ENCODE measurements at regions of chr6 and their contacts with region 1.

Region 1: GRCh38 chr6:31619805-31620585 is 520 bp upstream of the PRRC2A start:
- DNase-seq: peak; percentile 94 to 99 (median 96)
- ATAC-seq: peak; percentile 80
- H3K4me3 ChIP-seq: peak overlapping the region; percentile 83 to 96
- H3K4me3 Mint-ChIP-seq: peak overlapping the region; percentile 91
- H3K27ac ChIP-seq: peak overlapping the region; percentile 95 to 99
- H3K27ac Mint-ChIP-seq: peak overlapping the region; percentile 96
- H3K4me1 ChIP-seq: peaks cover 37% of the 10 kb centered on the region
- H3K4me1 Mint-ChIP-seq: peaks cover 52% of the 10 kb centered on the region
- H3K27me3 ChIP-seq: no peaks in the 10 kb centered on the region
- H3K27me3 Mint-ChIP-seq: no peaks in the 10 kb centered on the region
- CTCF ChIP-seq: no peak

Region 2: GRCh38 chr6:31308050-31308844 is 311.7 kb before region 1 on chr6:
- CTCF ChIA-PET with region 1: no interaction called
- POLR2A ChIA-PET with region 1: no interaction called
- intact Hi-C with region 1: no loop called
- DNase-seq: peak; percentile 48 to 86 (median 69)
- ATAC-seq: peak; percentile 95
- H3K4me3 ChIP-seq: peak overlapping the region; percentile 64 to 74
- H3K4me3 Mint-ChIP-seq: peak overlapping the region; percentile 85
- H3K27ac ChIP-seq: peak overlapping the region in 1 of 2 experiments; percentile 27
- H3K27ac Mint-ChIP-seq: peak overlapping the region; percentile 77
- H3K4me1 ChIP-seq: peaks cover 9% of the 10 kb centered on the region
- H3K4me1 Mint-ChIP-seq: peaks cover 7% of the 10 kb centered on the region
- H3K27me3 ChIP-seq: no peaks in the 10 kb centered on the region
- H3K27me3 Mint-ChIP-seq: no peaks in the 10 kb centered on the region
- CTCF ChIP-seq: no peak

Region 3: GRCh38 chr6:31383149-31383548 is 236.8 kb before region 1 on chr6:
- CTCF ChIA-PET with region 1: no interaction called
- POLR2A ChIA-PET with region 1: no interaction called
- intact Hi-C with region 1: no loop called
- DNase-seq: no peak
- ATAC-seq: no peak
- H3K4me3 ChIP-seq: no peak overlapping the region
- H3K4me3 Mint-ChIP-seq: no peak overlapping the region
- H3K27ac ChIP-seq: no peak overlapping the region
- H3K27ac Mint-ChIP-seq: no peak overlapping the region
- H3K4me1 ChIP-seq: no peaks in the 10 kb centered on the region
- H3K4me1 Mint-ChIP-seq: no peaks in the 10 kb centered on the region
- H3K27me3 ChIP-seq: peaks cover 0 to 6% of the 10 kb centered on the region in 2 experiments
- H3K27me3 Mint-ChIP-seq: peaks cover 10% of the 10 kb centered on the region
- CTCF ChIP-seq: no peak

Region 4: GRCh38 chr6:31580807-31581433 is 39.1 kb before region 1 on chr6:
- CTCF ChIA-PET with region 1: interaction called, 6 read pairs
- POLR2A ChIA-PET with region 1: interaction called, 20 read pairs
- intact Hi-C with region 1: no loop called
- DNase-seq: peak; percentile 81 to 97 (median 90)
- ATAC-seq: peak; percentile 73
- H3K4me3 ChIP-seq: peak overlapping the region; percentile 92 to 100
- H3K4me3 Mint-ChIP-seq: peak overlapping the region; percentile 99
- H3K27ac ChIP-seq: peak overlapping the region; percentile 77 to 91
- H3K27ac Mint-ChIP-seq: peak overlapping the region; percentile 96
- H3K4me1 ChIP-seq: peaks cover 69% of the 10 kb centered on the region
- H3K4me1 Mint-ChIP-seq: peaks cover 77% of the 10 kb centered on the region
- H3K27me3 ChIP-seq: no peaks in the 10 kb centered on the region
- H3K27me3 Mint-ChIP-seq: no peaks in the 10 kb centered on the region
- CTCF ChIP-seq: peak; percentile 98

Region 5: GRCh38 chr6:31597006-31597405 is 23.0 kb before region 1 on chr6:
- CTCF ChIA-PET with region 1: interaction called, 34 read pairs
- POLR2A ChIA-PET with region 1: interaction called, 10 read pairs
- intact Hi-C with region 1: no loop called
- DNase-seq: peak in 5 of 9 experiments; percentile 47 to 86 (median 56)
- ATAC-seq: peak; percentile 83
- H3K4me3 ChIP-seq: no peak overlapping the region
- H3K4me3 Mint-ChIP-seq: peak overlapping the region; percentile 3
- H3K27ac ChIP-seq: no peak overlapping the region
- H3K27ac Mint-ChIP-seq: peak overlapping the region; percentile 79
- H3K4me1 ChIP-seq: peaks cover 53% of the 10 kb centered on the region
- H3K4me1 Mint-ChIP-seq: peaks cover 50% of the 10 kb centered on the region
- H3K27me3 ChIP-seq: no peaks in the 10 kb centered on the region
- H3K27me3 Mint-ChIP-seq: no peaks in the 10 kb centered on the region
- CTCF ChIP-seq: peak; percentile 66

Region 6: GRCh38 chr6:31652925-31653718 is 33.1 kb after region 1 on chr6:
- CTCF ChIA-PET with region 1: interaction called, 3 read pairs
- POLR2A ChIA-PET with region 1: interaction called, 25 read pairs
- intact Hi-C with region 1: loop called (anchors 1 kb)
- DNase-seq: peak in 4 of 9 experiments; percentile 77 to 92 (median 88)
- ATAC-seq: peak; percentile 70
- H3K4me3 ChIP-seq: peak overlapping the region; percentile 78 to 82
- H3K4me3 Mint-ChIP-seq: peak overlapping the region; percentile 92
- H3K27ac ChIP-seq: peak overlapping the region; percentile 94 to 96
- H3K27ac Mint-ChIP-seq: peak overlapping the region; percentile 100
- H3K4me1 ChIP-seq: peaks cover 32% of the 10 kb centered on the region
- H3K4me1 Mint-ChIP-seq: peaks cover 59% of the 10 kb centered on the region
- H3K27me3 ChIP-seq: no peaks in the 10 kb centered on the region
- H3K27me3 Mint-ChIP-seq: no peaks in the 10 kb centered on the region
- CTCF ChIP-seq: no peak

Region 7: DNA sequence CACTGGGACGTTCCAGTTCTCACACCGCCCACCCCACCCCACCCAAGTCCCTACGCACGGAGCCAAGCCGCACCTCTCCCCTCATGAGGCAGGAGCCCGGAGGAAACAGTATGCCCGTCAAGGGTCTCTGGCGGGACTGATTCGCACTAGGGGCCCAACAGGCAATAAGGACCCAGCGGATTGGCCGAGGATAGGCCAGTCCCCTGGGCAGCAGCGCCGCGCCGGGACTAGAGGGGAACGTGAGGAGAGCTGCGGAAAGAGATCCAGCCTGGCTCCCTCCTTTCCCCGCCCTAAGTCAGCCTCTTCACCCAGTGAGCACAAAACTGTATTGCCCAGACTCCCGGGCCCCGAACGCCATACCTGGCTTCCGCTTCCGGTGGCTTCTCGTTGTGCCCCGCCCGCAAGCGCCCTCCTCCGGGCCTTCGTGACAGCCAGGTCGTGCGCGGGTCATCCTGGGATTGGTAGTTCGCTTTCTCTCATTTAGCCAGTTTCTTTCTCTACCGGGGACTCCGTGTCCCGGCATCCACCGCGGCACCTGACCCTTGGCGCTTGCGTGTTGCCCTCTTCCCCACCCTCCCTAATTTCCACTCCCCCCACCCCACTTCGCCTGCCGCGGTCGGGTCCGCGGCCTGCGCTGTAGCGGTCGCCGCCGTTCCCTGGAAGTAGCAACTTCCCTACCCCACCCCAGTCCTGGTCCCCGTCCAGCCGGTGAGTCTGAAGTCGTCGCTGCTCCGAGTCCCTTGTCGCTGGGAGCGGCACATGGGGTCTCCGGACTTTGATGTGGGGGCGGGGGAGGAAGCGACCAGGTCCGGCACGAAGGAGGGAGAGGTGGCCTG is 45.7 kb after region 1 on chr6 and contains the start of gene CSNK2B:
- CTCF ChIA-PET with region 1: no interaction called
- POLR2A ChIA-PET with region 1: interaction called, 3 read pairs
- intact Hi-C with region 1: loop called (anchors 1 kb)
- DNase-seq: peak; percentile 95 to 99 (median 98)
- ATAC-seq: peak; percentile 84
- H3K4me3 ChIP-seq: peak within 1 kb of the TSS; percentile 91 to 94
- H3K4me3 Mint-ChIP-seq: peak within 1 kb of the TSS; percentile 95
- H3K27ac ChIP-seq: peak within 1 kb of the TSS; percentile 96 to 99
- H3K27ac Mint-ChIP-seq: peak within 1 kb of the TSS; percentile 98
- H3K4me1 ChIP-seq: peaks cover 44% of the 10 kb centered on the region
- H3K4me1 Mint-ChIP-seq: peaks cover 56% of the 10 kb centered on the region
- H3K27me3 ChIP-seq: no peaks in the 10 kb centered on the region
- H3K27me3 Mint-ChIP-seq: no peaks in the 10 kb centered on the region
- CTCF ChIP-seq: no peak
- total RNA-seq, gene CSNK2B: 80.9 to 86.1 TPM

Region 8: DNA sequence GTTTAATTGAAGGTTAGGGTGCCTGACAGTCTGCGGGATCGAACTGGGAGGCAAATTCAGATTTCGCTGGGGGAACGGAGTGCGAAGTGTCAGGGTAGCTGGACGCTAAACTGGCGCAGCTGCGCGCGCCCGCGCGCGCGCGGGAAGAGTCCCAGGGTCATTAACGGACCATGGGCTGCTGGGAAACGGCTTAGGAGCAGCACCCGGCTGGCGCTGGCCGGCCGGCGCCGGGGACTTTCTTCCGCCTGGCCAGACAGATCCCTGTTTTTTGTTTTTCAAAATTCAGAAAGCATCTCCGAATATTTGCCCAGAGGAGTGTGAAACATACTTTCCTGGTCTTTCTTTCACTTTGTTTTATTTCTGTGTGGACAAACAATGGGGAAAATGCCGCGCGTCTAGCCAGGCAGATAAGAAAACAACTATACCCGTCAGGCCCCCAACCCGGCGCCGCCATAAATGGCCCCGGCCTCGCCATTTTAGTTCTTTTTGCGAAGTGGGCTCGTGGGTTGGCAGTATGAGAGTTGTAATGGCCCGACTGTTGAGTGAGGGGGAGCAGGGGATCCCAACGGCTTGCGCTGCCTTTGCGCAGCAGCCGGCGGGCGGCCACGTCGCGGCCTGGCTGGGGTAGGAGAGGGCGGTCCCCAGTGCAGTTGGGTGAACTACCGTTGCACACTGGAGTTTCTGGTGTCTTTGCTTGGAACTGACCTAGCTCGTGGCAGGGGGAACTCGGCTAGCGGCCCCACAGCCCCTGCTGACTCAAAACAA is 214.6 kb after region 1 on chr6:
- CTCF ChIA-PET with region 1: interaction called, 4 read pairs
- POLR2A ChIA-PET with region 1: interaction called, 3 read pairs
- intact Hi-C with region 1: loop called in 1 of 2 experiments (anchors 2 kb)
- DNase-seq: peak; percentile 70 to 89 (median 81)
- ATAC-seq: peak; percentile 75
- H3K4me3 ChIP-seq: peak overlapping the region; percentile 84 to 97
- H3K4me3 Mint-ChIP-seq: peak overlapping the region; percentile 98
- H3K27ac ChIP-seq: peak overlapping the region; percentile 93 to 99
- H3K27ac Mint-ChIP-seq: peak overlapping the region; percentile 99
- H3K4me1 ChIP-seq: peaks cover 42% of the 10 kb centered on the region
- H3K4me1 Mint-ChIP-seq: peaks cover 59% of the 10 kb centered on the region
- H3K27me3 ChIP-seq: no peaks in the 10 kb centered on the region
- H3K27me3 Mint-ChIP-seq: no peaks in the 10 kb centered on the region
- CTCF ChIP-seq: no peak

Region 9: DNA sequence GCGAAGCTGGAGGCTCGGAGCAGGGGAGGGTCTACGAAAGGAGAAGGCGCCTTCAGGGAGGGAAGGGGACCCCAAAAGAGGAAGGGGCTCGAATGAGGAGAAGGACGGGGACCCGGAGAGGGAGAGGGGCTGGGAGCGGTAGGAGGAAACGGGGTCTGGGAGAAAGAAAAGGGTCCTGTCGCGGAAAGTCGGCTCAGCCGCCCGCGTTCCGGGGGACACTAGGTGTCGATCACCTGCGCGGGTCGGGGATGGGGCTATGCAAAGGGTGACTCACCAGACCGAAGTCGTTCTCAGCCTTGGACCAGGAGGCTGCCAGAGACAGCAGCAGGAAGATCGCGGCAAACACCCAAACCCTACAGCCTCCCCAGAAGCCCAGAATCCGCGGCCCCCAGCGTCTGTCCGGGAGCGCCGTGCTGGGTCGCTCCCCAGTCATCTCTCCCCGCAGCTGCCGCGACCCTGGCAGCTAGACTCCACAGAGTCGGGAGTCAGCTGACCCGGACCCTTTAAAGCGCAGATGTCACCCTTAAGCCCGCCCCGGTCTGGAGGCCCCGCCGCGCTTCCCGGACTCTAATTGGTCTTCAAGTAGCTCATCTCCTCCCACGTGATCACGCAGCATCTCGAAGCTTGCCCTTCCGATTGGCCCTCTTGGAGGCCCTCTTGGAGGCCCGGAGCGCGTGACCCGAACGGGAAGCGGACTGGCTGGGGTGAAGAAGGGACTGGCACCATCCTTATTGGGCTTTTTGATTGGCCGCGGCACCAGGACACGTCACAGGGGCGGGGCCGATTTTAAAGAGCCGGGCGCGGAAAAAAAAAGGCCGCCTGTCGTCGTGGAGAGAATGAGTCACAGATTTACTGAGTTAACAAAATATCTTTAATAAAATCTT is 242.6 kb after region 1 on chr6 and contains the start of gene NEU1:
- CTCF ChIA-PET with region 1: no interaction called
- POLR2A ChIA-PET with region 1: no interaction called
- intact Hi-C with region 1: loop called (anchors 1 to 2 kb)
- DNase-seq: peak; percentile 97 to 100 (median 98)
- ATAC-seq: peak; percentile 91
- H3K4me3 ChIP-seq: peak within 1 kb of the TSS; percentile 75 to 94
- H3K4me3 Mint-ChIP-seq: peak within 1 kb of the TSS; percentile 95
- H3K27ac ChIP-seq: peak within 1 kb of the TSS; percentile 77 to 97
- H3K27ac Mint-ChIP-seq: peak within 1 kb of the TSS; percentile 98
- H3K4me1 ChIP-seq: peaks cover 17% of the 10 kb centered on the region
- H3K4me1 Mint-ChIP-seq: peaks cover 23% of the 10 kb centered on the region
- H3K27me3 ChIP-seq: no peaks in the 10 kb centered on the region
- H3K27me3 Mint-ChIP-seq: no peaks in the 10 kb centered on the region
- CTCF ChIP-seq: no peak
- total RNA-seq, gene NEU1: 30.0 to 30.2 TPM